ENCODE measurements at regions of chr9 and their contacts with region 1.

Region 1: GRCh38 chr9:115013998-115014397 is 83.6 kb upstream of the TNFSF8 start:
- DNase-seq: peak; percentile 48
- ATAC-seq: peak; percentile 74
- H3K4me3 ChIP-seq: no peak overlapping the region
- H3K27ac ChIP-seq: no peak overlapping the region
- H3K4me1 ChIP-seq: no peaks in the 10 kb centered on the region
- H3K27me3 ChIP-seq: peaks cover 28% of the 10 kb centered on the region; the same call in 1 of the 2 replicates
- CTCF ChIP-seq: peak; percentile 61 to 87 (median 78)
- POLR2A ChIP-seq: no peak
- RAD21 ChIP-seq: peak; percentile 93

Region 2: GRCh38 chr9:114339130-114339908 is 674.7 kb before region 1 on chr9:
- CTCF ChIA-PET with region 1: no interaction called
- POLR2A ChIA-PET with region 1: no interaction called
- RAD21 ChIA-PET with region 1: no interaction called
- intact Hi-C with region 1: loop called (anchors 5 kb)
- DNase-seq: no peak
- ATAC-seq: peak; percentile 93
- H3K4me3 ChIP-seq: no peak overlapping the region
- H3K27ac ChIP-seq: no peak overlapping the region
- H3K4me1 ChIP-seq: no peaks in the 10 kb centered on the region
- H3K27me3 ChIP-seq: no peaks in the 10 kb centered on the region
- CTCF ChIP-seq: peak; percentile 42 to 96 (median 94); a peak in 5 of 6 replicates
- POLR2A ChIP-seq: no peak
- RAD21 ChIP-seq: peak; percentile 75

Region 3: DNA sequence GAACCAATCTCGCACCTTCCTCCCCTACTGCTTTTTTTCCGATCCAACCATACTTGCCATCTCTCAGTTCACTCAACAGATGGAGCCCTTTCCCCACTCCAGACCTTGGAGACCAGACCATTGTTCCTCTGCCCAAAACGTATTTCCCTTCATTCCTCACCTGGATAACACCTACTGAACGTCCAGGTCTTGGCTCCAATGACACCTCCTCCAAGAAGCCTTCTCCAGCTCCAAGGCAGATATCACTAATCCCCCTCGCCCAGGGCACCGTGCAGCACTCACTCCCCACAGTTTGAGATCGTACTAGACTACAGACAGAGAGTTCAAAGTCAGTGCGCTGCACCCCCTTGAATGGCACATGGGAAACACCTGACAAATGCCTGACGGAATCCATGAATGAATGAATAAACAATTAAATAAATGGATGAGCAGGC is 579.1 kb before region 1 on chr9:
- CTCF ChIA-PET with region 1: no interaction called
- POLR2A ChIA-PET with region 1: no interaction called
- RAD21 ChIA-PET with region 1: no interaction called
- intact Hi-C with region 1: loop called (anchors 10 kb)
- DNase-seq: peak; percentile 35
- ATAC-seq: peak; percentile 93
- H3K4me3 ChIP-seq: no peak overlapping the region
- H3K27ac ChIP-seq: no peak overlapping the region
- H3K4me1 ChIP-seq: no peaks in the 10 kb centered on the region
- H3K27me3 ChIP-seq: no peaks in the 10 kb centered on the region
- CTCF ChIP-seq: peak; percentile 62 to 79 (median 70)
- POLR2A ChIP-seq: no peak
- RAD21 ChIP-seq: peak; percentile 88

Region 4: GRCh38 chr9:114681594-114682332 is 332.2 kb before region 1 on chr9 and contains the start of gene TEX48:
- CTCF ChIA-PET with region 1: interaction called, 16 read pairs
- POLR2A ChIA-PET with region 1: no interaction called
- RAD21 ChIA-PET with region 1: no interaction called
- intact Hi-C with region 1: loop called (anchors 1 kb)
- DNase-seq: peak; percentile 78
- ATAC-seq: peak; percentile 93
- H3K4me3 ChIP-seq: no peak within 1 kb of the TSS
- H3K27ac ChIP-seq: no peak within 1 kb of the TSS
- H3K4me1 ChIP-seq: peaks cover 13 to 22% of the 10 kb centered on the region in 2 experiments; a peak in 3 of 4 replicates
- H3K27me3 ChIP-seq: no peaks in the 10 kb centered on the region
- CTCF ChIP-seq: peak; percentile 79 to 90 (median 83)
- POLR2A ChIP-seq: no peak
- RAD21 ChIP-seq: peak; percentile 91
- total RNA-seq, gene TEX48: not detected

Region 5: DNA sequence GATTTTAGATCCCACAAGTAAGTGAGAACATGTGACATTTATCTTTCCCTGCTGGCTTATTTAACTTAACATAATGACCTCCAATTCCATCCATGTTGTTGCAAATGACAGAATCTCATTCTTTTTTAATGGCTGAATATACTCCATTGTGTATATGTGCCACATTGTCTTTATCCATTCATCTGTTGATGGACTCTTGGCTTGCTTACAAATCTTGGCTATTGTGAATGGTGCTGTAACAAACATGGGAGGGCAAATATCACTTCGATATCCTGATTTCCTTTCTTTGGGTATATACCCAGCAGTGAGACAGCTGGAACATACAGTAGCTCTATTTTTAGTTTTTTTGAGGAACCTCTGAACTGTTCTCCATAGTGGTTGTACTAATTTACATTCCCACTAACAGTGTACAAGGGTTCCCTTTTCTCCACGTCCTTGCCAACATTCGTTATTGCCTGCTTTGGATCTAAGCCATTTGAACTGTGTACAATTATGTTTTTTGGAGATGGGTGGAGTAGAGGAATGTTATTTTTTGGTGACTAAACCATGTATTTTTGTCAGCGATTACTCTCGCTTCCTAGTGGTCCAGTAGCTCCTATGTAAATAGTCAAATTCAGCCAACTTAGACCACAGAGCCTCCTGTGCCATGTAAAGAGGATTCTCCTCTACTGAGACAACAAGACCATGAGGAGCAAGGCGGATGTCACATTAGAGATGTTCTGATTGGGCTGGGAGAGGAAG is 268.7 kb before region 1 on chr9:
- CTCF ChIA-PET with region 1: no interaction called
- POLR2A ChIA-PET with region 1: no interaction called
- RAD21 ChIA-PET with region 1: no interaction called
- intact Hi-C with region 1: loop called (anchors 1 kb)
- DNase-seq: no peak
- ATAC-seq: no peak
- H3K4me3 ChIP-seq: no peak overlapping the region
- H3K27ac ChIP-seq: no peak overlapping the region
- H3K4me1 ChIP-seq: no peaks in the 10 kb centered on the region
- H3K27me3 ChIP-seq: no peaks in the 10 kb centered on the region
- CTCF ChIP-seq: no peak
- POLR2A ChIP-seq: no peak
- RAD21 ChIP-seq: no peak

Region 6: GRCh38 chr9:115306865-115307264 is 292.9 kb after region 1 on chr9:
- CTCF ChIA-PET with region 1: no interaction called
- POLR2A ChIA-PET with region 1: no interaction called
- RAD21 ChIA-PET with region 1: no interaction called
- intact Hi-C with region 1: no loop called
- DNase-seq: no peak
- ATAC-seq: no peak
- H3K4me3 ChIP-seq: no peak overlapping the region
- H3K27ac ChIP-seq: no peak overlapping the region
- H3K4me1 ChIP-seq: no peaks in the 10 kb centered on the region
- H3K27me3 ChIP-seq: no peaks in the 10 kb centered on the region
- CTCF ChIP-seq: no peak
- POLR2A ChIP-seq: no peak
- RAD21 ChIP-seq: no peak

Region 7: GRCh38 chr9:115524453-115525059 is 510.6 kb after region 1 on chr9:
- CTCF ChIA-PET with region 1: no interaction called
- POLR2A ChIA-PET with region 1: no interaction called
- RAD21 ChIA-PET with region 1: no interaction called
- intact Hi-C with region 1: loop called (anchors 1 kb)
- DNase-seq: peak; percentile 47
- ATAC-seq: peak; percentile 86
- H3K4me3 ChIP-seq: no peak overlapping the region
- H3K27ac ChIP-seq: no peak overlapping the region
- H3K4me1 ChIP-seq: no peaks in the 10 kb centered on the region
- H3K27me3 ChIP-seq: 0 out of 2 replicates have a peak, but pooled peaks cover 3% of the 10 kb centered on the region
- CTCF ChIP-seq: peak; percentile 66 to 77 (median 71); a peak in 5 of 6 replicates
- POLR2A ChIP-seq: no peak
- RAD21 ChIP-seq: peak; percentile 91

Measured in HCT116 (cell line).